ENCODE measurements at regions of chr6 and their contacts with region 1.

Region 1: DNA sequence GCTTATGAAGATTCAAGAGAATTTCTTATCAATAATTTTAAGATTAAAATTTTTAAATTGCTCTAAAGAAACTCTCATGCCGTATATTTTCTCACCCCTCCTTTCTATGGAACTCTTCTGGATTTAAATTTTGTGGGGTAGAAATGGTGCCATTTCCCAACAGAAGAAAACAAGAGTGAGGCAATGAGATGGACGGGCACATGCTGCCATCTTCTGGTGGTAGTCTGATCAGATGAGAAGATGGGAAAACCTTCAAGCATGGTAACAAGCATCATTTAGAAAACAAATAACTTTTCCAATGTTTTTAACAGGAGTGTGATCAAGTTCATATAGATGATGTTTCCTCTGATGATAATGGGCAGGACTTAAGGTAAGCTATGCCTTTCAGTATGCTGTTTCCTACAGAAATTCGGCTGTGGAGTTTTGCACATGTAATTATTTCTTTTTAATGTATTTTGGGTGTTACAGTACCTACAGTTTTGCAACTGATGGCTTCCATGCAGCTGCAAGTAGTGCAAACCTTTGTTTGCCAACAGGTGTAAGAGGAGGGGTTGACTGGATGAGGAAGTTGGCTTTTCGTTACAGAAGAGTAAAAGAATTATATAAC is 271.4 kb downstream of the EYA4 start:
- DNase-seq: peak; percentile 44
- ATAC-seq: peak; percentile 75
- H3K4me3 ChIP-seq: no peak overlapping the region
- H3K27ac ChIP-seq: no peak overlapping the region
- H3K4me1 ChIP-seq: no peaks in the 10 kb centered on the region
- H3K27me3 ChIP-seq: no peaks in the 10 kb centered on the region
- CTCF ChIP-seq: peak; percentile 58 to 84 (median 72)
- POLR2A ChIP-seq: no peak
- RAD21 ChIP-seq: peak; percentile 86

Region 2: GRCh38 chr6:132820629-132821381 is 691.7 kb before region 1 on chr6:
- CTCF ChIA-PET with region 1: no interaction called
- POLR2A ChIA-PET with region 1: no interaction called
- RAD21 ChIA-PET with region 1: no interaction called
- intact Hi-C with region 1: loop called (anchors 2 kb)
- DNase-seq: no peak
- ATAC-seq: peak; percentile 44
- H3K4me3 ChIP-seq: no peak overlapping the region
- H3K27ac ChIP-seq: peak overlapping the region; percentile 44; the same call in 1 of the 2 replicates
- H3K4me1 ChIP-seq: peaks cover 0 to 54% of the 10 kb centered on the region in 2 experiments; a peak in 3 of 4 replicates
- H3K27me3 ChIP-seq: no peaks in the 10 kb centered on the region
- CTCF ChIP-seq: no peak
- POLR2A ChIP-seq: peak; percentile 17
- RAD21 ChIP-seq: no peak

Region 3: GRCh38 chr6:133184798-133185372 is 327.6 kb before region 1 on chr6:
- CTCF ChIA-PET with region 1: no interaction called
- POLR2A ChIA-PET with region 1: interaction called, 4 read pairs
- RAD21 ChIA-PET with region 1: interaction called in 1 of 2 experiments, 3 read pairs
- intact Hi-C with region 1: loop called (anchors 2 kb)
- DNase-seq: no peak
- ATAC-seq: peak; percentile 57; the same call in 1 of the 2 replicates
- H3K4me3 ChIP-seq: no peak overlapping the region
- H3K27ac ChIP-seq: no peak overlapping the region
- H3K4me1 ChIP-seq: no peaks in the 10 kb centered on the region
- H3K27me3 ChIP-seq: peaks cover 21% of the 10 kb centered on the region
- CTCF ChIP-seq: peak; percentile 38 to 69 (median 50); a peak in 5 of 6 replicates
- POLR2A ChIP-seq: no peak
- RAD21 ChIP-seq: peak; percentile 58

Region 4: GRCh38 chr6:133286765-133287164 is 225.7 kb before region 1 on chr6:
- CTCF ChIA-PET with region 1: no interaction called
- POLR2A ChIA-PET with region 1: no interaction called
- RAD21 ChIA-PET with region 1: no interaction called
- intact Hi-C with region 1: loop called (anchors 5 kb)
- DNase-seq: no peak
- ATAC-seq: peak; percentile 75
- H3K4me3 ChIP-seq: no peak overlapping the region
- H3K27ac ChIP-seq: no peak overlapping the region
- H3K4me1 ChIP-seq: no peaks in the 10 kb centered on the region
- H3K27me3 ChIP-seq: no peaks in the 10 kb centered on the region
- CTCF ChIP-seq: peak; percentile 37 to 57 (median 49); a peak in 5 of 6 replicates
- POLR2A ChIP-seq: no peak
- RAD21 ChIP-seq: peak; percentile 51

Region 5: DNA sequence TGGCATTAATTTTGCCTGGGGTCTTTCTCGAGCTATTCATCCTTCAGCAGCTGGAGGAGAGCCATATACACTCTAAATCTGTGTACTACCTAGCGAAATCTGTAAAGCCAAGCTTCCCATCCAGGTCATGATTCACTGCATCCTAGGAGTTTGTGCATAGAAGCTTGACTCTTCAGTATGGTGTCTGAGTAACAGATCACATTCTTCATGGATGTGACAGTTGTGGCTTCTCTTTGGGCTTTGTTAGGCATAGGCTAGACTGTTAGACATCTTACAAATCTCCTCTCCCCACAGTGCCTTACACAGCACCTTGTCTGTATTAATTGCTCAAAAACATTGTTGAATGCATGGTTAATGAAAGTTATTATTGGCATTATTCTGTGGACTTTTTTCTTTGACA is 94.4 kb before region 1 on chr6:
- CTCF ChIA-PET with region 1: no interaction called
- POLR2A ChIA-PET with region 1: no interaction called
- RAD21 ChIA-PET with region 1: no interaction called
- intact Hi-C with region 1: no loop called
- DNase-seq: no peak
- ATAC-seq: no peak
- H3K4me3 ChIP-seq: no peak overlapping the region
- H3K27ac ChIP-seq: no peak overlapping the region
- H3K4me1 ChIP-seq: no peaks in the 10 kb centered on the region
- H3K27me3 ChIP-seq: no peaks in the 10 kb centered on the region; the same call in 1 of the 2 replicates
- CTCF ChIP-seq: no peak
- POLR2A ChIP-seq: no peak
- RAD21 ChIP-seq: no peak